ENCODE measurements at regions of chr1 and their contacts with region 1.

Region 1: DNA sequence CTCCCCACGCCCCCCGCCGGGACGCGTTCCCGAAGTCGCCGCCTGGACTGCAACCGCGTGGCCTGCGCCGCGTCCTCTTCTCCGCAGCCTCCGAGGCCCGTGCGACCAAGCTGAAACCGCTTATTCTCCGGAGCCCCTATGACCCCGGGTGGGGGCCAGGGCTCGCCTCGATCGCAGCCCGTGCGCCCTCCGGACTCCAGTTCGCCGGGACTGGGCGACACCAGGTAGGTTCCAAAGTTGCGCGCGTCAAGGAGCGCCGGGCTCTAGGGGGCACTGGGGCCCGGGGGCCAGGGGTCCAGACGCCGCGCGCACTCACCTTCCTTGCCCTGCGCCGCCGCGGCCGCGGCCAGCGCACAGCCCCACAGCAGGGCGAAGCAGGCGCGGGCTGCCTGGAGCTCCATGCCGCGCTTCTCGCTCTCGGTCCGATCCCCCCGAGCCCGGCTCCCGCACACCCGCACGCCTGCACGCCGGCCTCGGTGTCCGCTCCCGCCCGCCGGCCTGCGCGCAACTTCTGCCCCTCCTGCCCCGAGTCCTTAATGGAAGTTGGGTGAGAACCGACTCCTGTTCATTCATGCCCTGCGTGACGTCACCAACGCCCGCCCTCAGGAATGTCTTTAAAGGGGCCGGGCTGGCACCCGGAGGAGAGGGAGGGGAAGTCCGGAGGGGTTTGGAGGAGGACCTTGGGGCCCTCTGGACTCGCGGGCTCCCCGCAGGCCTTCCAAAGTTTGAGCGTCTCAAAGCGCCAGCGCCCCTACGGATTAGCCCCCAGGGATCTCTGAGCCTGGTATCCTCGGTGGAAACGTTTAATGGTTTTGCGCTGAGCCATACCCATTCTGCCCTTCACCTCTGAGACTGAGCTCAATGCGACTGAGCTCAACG is at the start of gene EPHA2:
- DNase-seq: peak; percentile 75 to 96
- H3K4me3 ChIP-seq: peak within 1 kb of the TSS; percentile 70 to 87 (median 81)
- H3K27ac ChIP-seq: peak within 1 kb of the TSS; percentile 53; the same call in 1 of the 2 replicates
- H3K4me1 ChIP-seq: peaks cover 5 to 41% (median 30%) of the 10 kb centered on the region in 4 experiments
- H3K27me3 ChIP-seq: peaks cover 0 to 10% (median 6%) of the 10 kb centered on the region in 4 experiments; a peak in 4 of 7 replicates
- CTCF ChIP-seq: no peak
- EP300 ChIP-seq: peak in 1 of 2 experiments; percentile 68; a peak in 1 of 3 replicates
- POLR2A ChIP-seq: peak in 1 of 2 experiments; percentile 95; a peak in 2 of 3 replicates
- RAD21 ChIP-seq: 0 out of 4 replicates have a peak, but pooled peaks of 1 of the 2 experiments have one; percentile 1
- total RNA-seq, gene EPHA2: 28.4 and 33.6 TPM in 2 replicates

Region 2: GRCh38 chr1:16116002-16116401 is 39.8 kb before region 1 on chr1:
- CTCF ChIA-PET with region 1: interaction called, 11 read pairs
- POLR2A ChIA-PET with region 1: interaction called, 5 read pairs
- DNase-seq: peak; percentile 56 to 87
- H3K4me3 ChIP-seq: peak overlapping the region in 1 of 4 experiments; percentile 32; a peak in 2 of 8 replicates
- H3K27ac ChIP-seq: no peak overlapping the region
- H3K4me1 ChIP-seq: peaks cover 20 to 47% (median 33%) of the 10 kb centered on the region in 4 experiments
- H3K27me3 ChIP-seq: no peaks in the 10 kb centered on the region
- CTCF ChIP-seq: no peak
- EP300 ChIP-seq: peak; percentile 13 to 94; a peak in 2 of 3 replicates
- POLR2A ChIP-seq: no peak
- RAD21 ChIP-seq: no peak; a peak in 1 of 4 replicates

Region 3: GRCh38 chr1:16139473-16139962 is 16.3 kb before region 1 on chr1:
- CTCF ChIA-PET with region 1: interaction called, 28 read pairs
- POLR2A ChIA-PET with region 1: interaction called, 52 read pairs
- DNase-seq: no peak
- H3K4me3 ChIP-seq: no peak overlapping the region
- H3K27ac ChIP-seq: no peak overlapping the region; the same call in 1 of the 2 replicates
- H3K4me1 ChIP-seq: peaks cover 0 to 25% (median 13%) of the 10 kb centered on the region in 4 experiments; a peak in 6 of 7 replicates
- H3K27me3 ChIP-seq: no peaks in the 10 kb centered on the region
- CTCF ChIP-seq: no peak
- EP300 ChIP-seq: no peak
- POLR2A ChIP-seq: no peak
- RAD21 ChIP-seq: no peak

Region 4: GRCh38 chr1:16181887-16182719 is 26.3 kb after region 1 on chr1:
- CTCF ChIA-PET with region 1: interaction called, 10 read pairs
- POLR2A ChIA-PET with region 1: interaction called, 4 read pairs
- DNase-seq: peak; percentile 58 to 82
- H3K4me3 ChIP-seq: no peak overlapping the region
- H3K27ac ChIP-seq: peak overlapping the region; percentile 70; the same call in 1 of the 2 replicates
- H3K4me1 ChIP-seq: peaks cover 4 to 11% (median 8%) of the 10 kb centered on the region in 4 experiments; a peak in 6 of 7 replicates
- H3K27me3 ChIP-seq: no peaks in the 10 kb centered on the region; a peak in 1 of 7 replicates
- CTCF ChIP-seq: no peak
- EP300 ChIP-seq: 0 out of 3 replicates have a peak, but pooled peaks of 1 of the 2 experiments have one; percentile 14
- POLR2A ChIP-seq: peak in 1 of 2 experiments; percentile 69; a peak in 2 of 3 replicates
- RAD21 ChIP-seq: no peak

Region 5: GRCh38 chr1:16607433-16607851 is 451.7 kb after region 1 on chr1:
- CTCF ChIA-PET with region 1: no interaction called
- POLR2A ChIA-PET with region 1: no interaction called
- DNase-seq: no peak
- H3K4me3 ChIP-seq: no peak overlapping the region
- H3K27ac ChIP-seq: no peak overlapping the region
- H3K4me1 ChIP-seq: peaks cover 0 to 4% (median 1%) of the 10 kb centered on the region in 4 experiments; a peak in 1 of 7 replicates
- H3K27me3 ChIP-seq: peaks cover 3 to 15% (median 9%) of the 10 kb centered on the region in 4 experiments
- CTCF ChIP-seq: no peak
- EP300 ChIP-seq: no peak
- POLR2A ChIP-seq: no peak
- RAD21 ChIP-seq: no peak

Measured in H1 (cell line).